Panc1 (cell line): ENCODE measurements at regions of chr2 and their contacts with region 1.

Region 1: GRCh38 chr2:173079968-173080860 is 4.6 kb downstream of the MAP3K20 start:
- DNase-seq: peak; percentile 93
- ATAC-seq: peak; percentile 79
- H3K4me3 ChIP-seq: peak overlapping the region in 1 of 2 experiments; percentile 26; a peak in 2 of 4 replicates
- H3K27ac ChIP-seq: peak overlapping the region; percentile 100
- H3K4me1 ChIP-seq: peaks cover 73% of the 10 kb centered on the region
- H3K27me3 ChIP-seq: no peaks in the 10 kb centered on the region
- CTCF ChIP-seq: no peak

Region 2: DNA sequence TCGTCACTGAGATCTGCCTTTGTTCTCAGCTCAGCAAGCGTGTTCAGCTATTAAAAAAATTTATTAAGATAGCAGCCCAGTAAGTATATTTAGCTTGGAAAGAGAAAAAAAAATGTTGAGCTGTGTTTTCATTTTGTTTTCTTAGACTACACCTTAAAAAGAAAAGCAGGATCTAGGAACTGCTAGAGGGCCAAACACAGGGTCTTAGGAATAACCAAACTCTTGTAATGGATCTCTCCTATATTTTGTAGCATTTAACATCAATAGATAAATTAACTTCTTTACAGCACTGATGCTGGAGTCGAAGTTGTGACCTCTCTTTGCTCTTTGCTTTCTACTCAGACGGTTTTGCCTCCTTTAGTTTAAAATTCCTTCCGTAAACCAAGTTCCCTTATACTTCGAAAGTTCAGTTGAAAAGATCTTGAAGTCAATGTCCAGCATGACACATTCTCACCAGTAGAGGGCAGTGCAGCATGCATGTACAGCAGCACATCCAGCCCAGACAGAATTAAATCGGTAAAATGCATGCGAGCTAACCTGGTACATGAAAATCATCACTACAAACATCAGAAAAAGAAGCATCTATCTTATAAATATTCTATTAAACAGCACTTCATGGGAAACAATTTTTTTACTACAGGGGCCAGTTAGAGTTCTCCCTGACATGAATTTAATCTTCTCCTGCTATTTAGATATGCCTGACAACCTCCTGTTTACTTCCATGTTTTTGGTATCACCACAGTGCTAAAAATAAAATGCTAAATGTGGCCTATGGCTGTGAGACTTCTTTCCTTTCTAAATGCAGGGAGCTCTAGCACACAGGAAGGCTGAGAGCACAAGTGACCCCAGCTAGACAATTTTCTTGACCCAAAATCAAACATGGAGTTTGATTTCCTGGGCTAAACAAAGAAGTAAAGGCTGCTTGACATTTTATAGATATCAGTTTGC is 52.8 kb before region 1 on chr2:
- CTCF ChIA-PET with region 1: interaction called, 7 read pairs
- POLR2A ChIA-PET with region 1: interaction called, 5 read pairs
- in situ Hi-C with region 1: no loop called
- intact Hi-C with region 1: loop called (anchors 2 kb)
- DNase-seq: peak; percentile 85
- ATAC-seq: peak; percentile 88
- H3K4me3 ChIP-seq: no peak overlapping the region
- H3K27ac ChIP-seq: peak overlapping the region; percentile 96
- H3K4me1 ChIP-seq: peaks cover 39% of the 10 kb centered on the region
- H3K27me3 ChIP-seq: no peaks in the 10 kb centered on the region
- CTCF ChIP-seq: peak; percentile 88

Region 3: GRCh38 chr2:173090276-173090877 is 10.2 kb after region 1 on chr2:
- CTCF ChIA-PET with region 1: interaction called, 5 read pairs
- POLR2A ChIA-PET with region 1: interaction called, 10 read pairs
- in situ Hi-C with region 1: no loop called
- intact Hi-C with region 1: no loop called
- DNase-seq: no peak
- ATAC-seq: peak; percentile 72
- H3K4me3 ChIP-seq: peak overlapping the region; percentile 11 to 32; a peak in 3 of 4 replicates
- H3K27ac ChIP-seq: peak overlapping the region; percentile 100
- H3K4me1 ChIP-seq: peaks cover 85% of the 10 kb centered on the region
- H3K27me3 ChIP-seq: no peaks in the 10 kb centered on the region
- CTCF ChIP-seq: no peak

Region 4: GRCh38 chr2:173231042-173231441 is 150.8 kb after region 1 on chr2:
- CTCF ChIA-PET with region 1: no interaction called
- POLR2A ChIA-PET with region 1: no interaction called
- in situ Hi-C with region 1: no loop called
- intact Hi-C with region 1: no loop called
- DNase-seq: no peak
- ATAC-seq: no peak
- H3K4me3 ChIP-seq: no peak overlapping the region
- H3K27ac ChIP-seq: no peak overlapping the region
- H3K4me1 ChIP-seq: 0 out of 2 replicates have a peak, but pooled peaks cover 3% of the 10 kb centered on the region
- H3K27me3 ChIP-seq: no peaks in the 10 kb centered on the region
- CTCF ChIP-seq: no peak